ENCODE measurements at regions of chr9 and their contacts with region 1.

Region 1: GRCh38 chr9:121213136-121213806 is 11.6 kb upstream of the RAB14 start:
- DNase-seq: peak; percentile 71
- CTCF ChIP-seq: peak; percentile 82

Region 2: GRCh38 chr9:121194743-121195142 is 18.5 kb before region 1 on chr9:
- CTCF ChIA-PET with region 1: interaction called, 66 read pairs
- POLR2A ChIA-PET with region 1: no interaction called
- DNase-seq: no peak
- CTCF ChIP-seq: no peak

Region 3: GRCh38 chr9:121226186-121226585 is 12.9 kb after region 1 on chr9:
- CTCF ChIA-PET with region 1: interaction called, 38 read pairs
- POLR2A ChIA-PET with region 1: no interaction called
- DNase-seq: no peak
- CTCF ChIP-seq: no peak

Region 4: GRCh38 chr9:121267689-121268597 is 54.7 kb after region 1 on chr9 and contains the start of gene GSN:
- CTCF ChIA-PET with region 1: interaction called, 19 read pairs
- POLR2A ChIA-PET with region 1: interaction called, 3 read pairs
- DNase-seq: peak; percentile 87
- CTCF ChIP-seq: no peak

Region 5: DNA sequence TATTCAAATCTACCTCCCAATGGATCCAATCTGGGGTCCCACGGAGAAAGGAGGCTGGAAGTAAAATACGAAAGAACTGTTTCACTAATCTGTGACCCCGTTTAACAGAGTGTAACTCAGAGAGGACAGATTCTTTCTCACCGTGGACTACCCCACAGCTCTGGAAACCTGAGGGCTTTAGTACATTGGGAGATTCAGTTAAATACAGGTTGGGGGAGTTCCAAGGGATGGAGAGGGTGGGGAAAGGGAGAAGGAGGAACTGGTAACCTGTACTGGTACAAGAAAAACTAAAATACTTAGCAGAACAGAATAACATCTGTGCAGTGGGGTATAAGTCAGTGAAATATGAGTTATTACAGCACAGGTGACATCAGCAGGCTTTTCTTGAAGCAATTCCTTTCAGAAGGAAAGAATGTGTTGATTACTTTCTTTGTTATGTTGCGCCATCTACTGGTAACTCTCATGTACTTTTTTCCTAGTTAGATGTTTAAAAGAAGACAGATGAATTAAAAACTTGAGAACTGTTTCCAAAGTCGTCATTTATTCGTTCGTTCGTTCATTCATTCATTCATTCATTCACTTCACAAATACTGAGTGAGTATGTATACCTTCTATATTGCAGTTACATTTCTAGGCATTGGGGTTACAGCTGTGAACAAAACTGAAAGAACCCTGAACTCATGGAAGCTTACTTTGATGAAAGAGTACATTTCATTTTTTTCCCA is 186.8 kb after region 1 on chr9:
- CTCF ChIA-PET with region 1: interaction called, 21 read pairs
- POLR2A ChIA-PET with region 1: no interaction called
- DNase-seq: peak; percentile 26
- CTCF ChIP-seq: peak; percentile 43